ENCODE measurements at regions of chr16 and their contacts with region 1.

Region 1: DNA sequence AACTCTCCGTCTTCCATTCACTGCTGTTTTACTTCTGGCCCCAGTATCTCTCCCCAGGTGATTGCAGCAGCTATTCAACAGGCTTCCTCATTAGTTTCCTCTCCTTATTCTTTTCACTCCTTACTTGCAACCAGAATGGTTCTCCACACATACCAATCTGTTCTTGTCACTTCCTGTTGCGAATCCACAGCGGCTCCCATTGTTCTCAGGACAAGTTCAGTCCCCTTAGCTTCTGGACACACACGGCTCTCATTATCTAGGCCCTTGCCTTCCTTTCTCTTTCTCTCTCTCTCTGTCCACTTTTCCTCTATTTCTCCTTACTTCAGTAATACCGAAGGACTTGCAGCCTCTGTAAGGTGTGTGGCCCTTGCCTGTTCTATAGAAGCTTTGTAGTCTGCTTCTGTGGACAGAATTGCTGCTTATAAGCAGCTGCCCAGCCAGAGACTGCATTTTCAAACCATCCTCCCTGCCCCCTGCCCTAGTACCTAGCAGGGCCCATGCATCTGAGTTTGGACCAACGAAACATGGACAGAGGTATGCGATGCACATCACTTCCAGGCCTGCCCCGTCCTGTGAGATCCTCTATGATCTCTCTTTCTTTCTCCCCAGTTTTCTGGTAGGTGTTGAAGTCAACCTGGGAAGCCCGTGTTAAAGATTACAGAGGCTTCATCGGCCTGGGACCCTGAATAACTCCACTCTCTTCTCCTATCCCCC is 45.7 kb downstream of the VAT1L start:
- DNase-seq: peak; percentile 72
- H3K4me3 Mint-ChIP-seq: no peak overlapping the region
- H3K27ac Mint-ChIP-seq: no peak overlapping the region
- H3K4me1 Mint-ChIP-seq: peaks cover 13% of the 10 kb centered on the region
- H3K27me3 Mint-ChIP-seq: peaks cover 12% of the 10 kb centered on the region
- CTCF ChIP-seq: no peak

Region 2: GRCh38 chr16:77450563-77451487 is 383.3 kb before region 1 on chr16:
- CTCF ChIA-PET with region 1: no interaction called
- POLR2A ChIA-PET with region 1: no interaction called
- intact Hi-C with region 1: no loop called
- DNase-seq: peak; percentile 34
- H3K4me3 Mint-ChIP-seq: no peak overlapping the region
- H3K27ac Mint-ChIP-seq: no peak overlapping the region
- H3K4me1 Mint-ChIP-seq: no peaks in the 10 kb centered on the region
- H3K27me3 Mint-ChIP-seq: peaks cover 50% of the 10 kb centered on the region
- CTCF ChIP-seq: no peak

Region 3: GRCh38 chr16:77788181-77789084 is 45.6 kb before region 1 on chr16 and contains the start of gene VAT1L:
- CTCF ChIA-PET with region 1: interaction called, 3 read pairs
- POLR2A ChIA-PET with region 1: no interaction called
- intact Hi-C with region 1: loop called (anchors 5 kb)
- DNase-seq: peak; percentile 16
- H3K4me3 Mint-ChIP-seq: peak within 1 kb of the TSS; percentile 77
- H3K27ac Mint-ChIP-seq: no peak within 1 kb of the TSS
- H3K4me1 Mint-ChIP-seq: peaks cover 9% of the 10 kb centered on the region
- H3K27me3 Mint-ChIP-seq: peaks cover 61% of the 10 kb centered on the region
- CTCF ChIP-seq: no peak
- total RNA-seq, gene VAT1L: 0.88 and 1.1 TPM in 2 replicates

Region 4: GRCh38 chr16:77877712-77878347 is 43.8 kb after region 1 on chr16:
- CTCF ChIA-PET with region 1: interaction called, 4 read pairs
- POLR2A ChIA-PET with region 1: no interaction called
- intact Hi-C with region 1: loop called (anchors 5 kb)
- DNase-seq: peak; percentile 66
- H3K4me3 Mint-ChIP-seq: no peak overlapping the region
- H3K27ac Mint-ChIP-seq: no peak overlapping the region
- H3K4me1 Mint-ChIP-seq: peaks cover 6% of the 10 kb centered on the region
- H3K27me3 Mint-ChIP-seq: no peaks in the 10 kb centered on the region
- CTCF ChIP-seq: no peak

Region 5: GRCh38 chr16:77898671-77899211 is 64.7 kb after region 1 on chr16:
- CTCF ChIA-PET with region 1: no interaction called
- POLR2A ChIA-PET with region 1: no interaction called
- intact Hi-C with region 1: no loop called
- DNase-seq: peak; percentile 11
- H3K4me3 Mint-ChIP-seq: no peak overlapping the region
- H3K27ac Mint-ChIP-seq: no peak overlapping the region
- H3K4me1 Mint-ChIP-seq: no peaks in the 10 kb centered on the region
- H3K27me3 Mint-ChIP-seq: no peaks in the 10 kb centered on the region
- CTCF ChIP-seq: no peak

Region 6: DNA sequence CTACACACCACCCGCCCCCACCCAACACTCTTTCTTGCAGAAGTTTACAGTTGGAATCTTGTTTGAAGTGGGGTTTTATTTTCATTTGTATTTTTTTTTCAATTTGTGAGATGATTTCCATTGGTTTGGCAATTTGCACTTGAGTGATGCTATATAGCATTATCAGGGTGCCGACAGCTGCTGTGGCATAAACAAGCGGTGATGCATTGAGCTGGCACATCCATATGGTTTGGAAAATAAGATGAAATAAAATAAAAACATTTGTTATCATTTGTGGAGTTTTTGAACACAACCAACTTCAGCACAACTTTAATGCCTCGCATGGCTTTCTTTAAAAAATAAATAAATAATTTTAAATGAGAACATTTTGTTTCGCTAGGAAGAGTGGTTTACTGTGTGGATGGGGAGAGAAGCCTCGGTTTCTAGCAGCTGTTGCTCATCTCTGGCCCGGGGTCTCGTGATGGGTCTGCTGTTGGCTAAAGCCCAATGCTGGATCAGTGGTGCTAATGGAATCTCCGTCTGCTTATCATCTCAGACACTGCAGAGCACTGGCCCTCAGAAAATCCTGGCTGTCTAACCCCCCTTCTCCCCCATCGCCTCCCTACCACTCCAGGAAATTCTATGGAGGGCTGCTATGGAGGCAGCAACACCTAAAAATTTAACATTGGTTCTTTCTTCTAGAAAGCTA is 1958.7 kb after region 1 on chr16:
- CTCF ChIA-PET with region 1: no interaction called
- POLR2A ChIA-PET with region 1: no interaction called
- intact Hi-C with region 1: no loop called
- DNase-seq: no peak
- H3K4me3 Mint-ChIP-seq: no peak overlapping the region
- H3K27ac Mint-ChIP-seq: no peak overlapping the region
- H3K4me1 Mint-ChIP-seq: peaks cover 4% of the 10 kb centered on the region
- H3K27me3 Mint-ChIP-seq: no peaks in the 10 kb centered on the region
- CTCF ChIP-seq: no peak

Measured in MCF 10A (cell line).